ENCODE measurements at regions of chr9 and their contacts with region 1.

Region 1: GRCh38 chr9:132901856-132902831 is 23.4 kb downstream of the SPACA9 start:
- DNase-seq: peak; percentile 59
- ATAC-seq: peak; percentile 99
- H3K4me3 ChIP-seq: no peak overlapping the region
- H3K27ac ChIP-seq: no peak overlapping the region
- H3K4me1 ChIP-seq: no peaks in the 10 kb centered on the region
- H3K27me3 ChIP-seq: no peaks in the 10 kb centered on the region
- CTCF ChIP-seq: peak; percentile 74 to 97 (median 92)
- POLR2A ChIP-seq: no peak
- RAD21 ChIP-seq: peak; percentile 70

Region 2: DNA sequence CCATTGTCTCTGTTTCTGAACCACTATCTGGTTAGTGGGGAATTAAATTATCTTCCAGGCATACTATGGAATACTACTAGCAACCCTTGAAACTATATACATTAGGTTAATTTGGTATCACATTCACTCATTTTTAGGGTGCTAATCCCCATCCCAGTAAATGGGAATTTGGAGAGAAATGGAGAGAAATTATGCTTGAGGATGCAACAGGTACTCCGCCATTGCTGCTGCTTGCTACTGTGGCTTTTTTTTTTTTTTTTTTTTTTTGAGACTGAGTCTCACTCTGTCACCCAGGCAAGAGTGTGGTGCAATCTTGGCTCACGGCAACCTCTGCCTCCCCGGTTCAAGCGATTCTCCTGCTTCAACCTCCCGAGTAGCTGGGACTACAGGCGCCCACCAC is 90.2 kb before region 1 on chr9:
- CTCF ChIA-PET with region 1: interaction called, 6 read pairs
- POLR2A ChIA-PET with region 1: no interaction called
- RAD21 ChIA-PET with region 1: no interaction called
- intact Hi-C with region 1: loop called (anchors 1 kb)
- DNase-seq: no peak
- ATAC-seq: no peak
- H3K4me3 ChIP-seq: no peak overlapping the region
- H3K27ac ChIP-seq: no peak overlapping the region
- H3K4me1 ChIP-seq: peaks cover 0 to 9% of the 10 kb centered on the region in 2 experiments; a peak in 1 of 4 replicates
- H3K27me3 ChIP-seq: peaks cover 7% of the 10 kb centered on the region; the same call in 1 of the 2 replicates
- CTCF ChIP-seq: no peak
- POLR2A ChIP-seq: no peak
- RAD21 ChIP-seq: no peak